Right cardiac atrium (tissue), 5 donors: ENCODE measurements at regions of chr6 and their contacts with region 1.

Region 1: DNA sequence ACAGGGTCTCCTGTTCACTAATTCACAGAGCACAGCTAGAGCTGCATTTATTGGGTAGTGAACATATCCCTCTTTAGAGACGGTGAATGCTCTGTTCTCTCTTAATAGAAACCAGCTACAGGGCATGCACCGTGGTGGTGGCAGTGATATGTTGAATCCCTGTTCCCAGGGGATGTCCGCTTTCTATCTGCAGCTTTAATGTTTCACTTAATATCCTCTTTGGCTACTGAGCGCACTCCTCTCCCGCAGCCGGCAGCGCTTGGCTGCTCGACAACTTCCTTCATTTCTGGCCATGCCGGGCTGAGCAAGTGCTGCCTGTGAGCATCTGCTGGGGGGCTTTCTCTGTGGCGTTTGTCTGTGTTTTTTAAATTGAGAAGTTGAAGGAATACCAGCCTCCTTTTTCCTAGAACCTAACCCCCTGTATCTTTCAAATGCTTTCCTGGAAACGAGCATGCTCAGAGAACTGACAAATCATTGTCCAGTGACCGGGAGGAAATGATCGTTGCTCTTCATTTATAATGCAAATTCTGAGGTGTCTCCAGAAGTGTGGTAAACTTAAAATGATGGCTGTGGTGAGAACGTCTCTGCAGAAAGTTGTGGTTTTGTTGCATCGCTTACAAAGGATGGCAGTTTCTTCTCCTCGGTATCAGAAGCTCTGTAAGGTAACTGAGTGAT is 297.9 kb downstream of the UTRN start:
- DNase-seq: peak; percentile 27 to 76 (median 74)
- ATAC-seq: peak; percentile 61 to 72
- H3K4me3 ChIP-seq: peak overlapping the region; percentile 7
- H3K27ac ChIP-seq: no peak overlapping the region
- H3K4me1 ChIP-seq: no peaks in the 10 kb centered on the region
- H3K27me3 ChIP-seq: no peaks in the 10 kb centered on the region

Region 2: GRCh38 chr6:144395014-144395413 is 188.1 kb before region 1 on chr6:
- intact Hi-C with region 1: no loop called
- DNase-seq: no peak
- ATAC-seq: no peak
- H3K4me3 ChIP-seq: no peak overlapping the region
- H3K27ac ChIP-seq: no peak overlapping the region
- H3K4me1 ChIP-seq: no peaks in the 10 kb centered on the region
- H3K27me3 ChIP-seq: no peaks in the 10 kb centered on the region

Region 3: GRCh38 chr6:144630857-144631256 is 47.8 kb after region 1 on chr6:
- intact Hi-C with region 1: no loop called
- DNase-seq: no peak
- ATAC-seq: no peak
- H3K4me3 ChIP-seq: no peak overlapping the region
- H3K27ac ChIP-seq: no peak overlapping the region
- H3K4me1 ChIP-seq: no peaks in the 10 kb centered on the region
- H3K27me3 ChIP-seq: no peaks in the 10 kb centered on the region

Region 4: GRCh38 chr6:144931172-144932035 is 348.3 kb after region 1 on chr6:
- intact Hi-C with region 1: loop called in 1 of 4 experiments (anchors 10 kb)
- DNase-seq: no peak
- ATAC-seq: no peak
- H3K4me3 ChIP-seq: no peak overlapping the region
- H3K27ac ChIP-seq: no peak overlapping the region
- H3K4me1 ChIP-seq: no peaks in the 10 kb centered on the region
- H3K27me3 ChIP-seq: no peaks in the 10 kb centered on the region

Region 5: DNA sequence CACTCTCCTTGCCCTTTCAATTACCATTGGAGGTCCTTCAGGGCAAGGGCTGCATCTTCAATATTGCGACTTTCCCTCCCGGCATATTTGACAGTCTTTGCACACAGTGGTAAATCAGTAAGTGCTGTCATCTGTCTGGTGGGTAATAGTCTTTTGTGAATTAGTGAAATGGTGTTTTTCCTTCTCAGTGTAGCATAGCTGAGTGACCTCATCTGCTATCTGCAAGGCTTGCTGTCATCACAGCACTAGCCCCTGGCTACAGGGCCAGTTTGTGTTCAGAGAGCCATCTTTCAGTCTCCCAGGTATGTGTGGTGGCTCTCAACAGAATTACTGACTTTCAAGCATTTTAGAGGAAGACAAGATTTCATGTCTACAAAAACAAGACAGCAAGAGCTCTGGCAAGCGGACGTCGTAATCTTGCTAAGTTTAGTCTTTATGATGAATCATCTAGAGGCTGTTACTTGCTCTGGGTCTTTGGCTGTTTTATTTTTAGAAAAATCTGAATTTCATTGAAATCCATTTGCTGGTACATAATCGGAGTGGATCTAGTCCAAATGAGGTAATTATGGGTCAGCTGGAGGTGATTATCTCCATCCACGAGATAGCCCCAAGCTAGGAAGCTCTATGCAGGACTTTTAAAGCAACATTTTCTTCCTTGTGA is 623.3 kb after region 1 on chr6:
- intact Hi-C with region 1: loop called in 3 of 4 experiments (anchors 5 to 10 kb)
- DNase-seq: no peak
- ATAC-seq: peak in 1 of 2 donors; percentile 38
- H3K4me3 ChIP-seq: no peak overlapping the region
- H3K27ac ChIP-seq: no peak overlapping the region
- H3K4me1 ChIP-seq: peaks cover 2% of the 10 kb centered on the region
- H3K27me3 ChIP-seq: no peaks in the 10 kb centered on the region

Region 6: GRCh38 chr6:145214570-145214969 is 631.5 kb after region 1 on chr6:
- intact Hi-C with region 1: loop called in 3 of 4 experiments (anchors 5 to 10 kb)
- DNase-seq: no peak
- ATAC-seq: no peak
- H3K4me3 ChIP-seq: no peak overlapping the region
- H3K27ac ChIP-seq: no peak overlapping the region
- H3K4me1 ChIP-seq: no peaks in the 10 kb centered on the region
- H3K27me3 ChIP-seq: no peaks in the 10 kb centered on the region